HepG2 (cell line): ENCODE measurements at regions of chr6 and their contacts with region 1.

Region 1: DNA sequence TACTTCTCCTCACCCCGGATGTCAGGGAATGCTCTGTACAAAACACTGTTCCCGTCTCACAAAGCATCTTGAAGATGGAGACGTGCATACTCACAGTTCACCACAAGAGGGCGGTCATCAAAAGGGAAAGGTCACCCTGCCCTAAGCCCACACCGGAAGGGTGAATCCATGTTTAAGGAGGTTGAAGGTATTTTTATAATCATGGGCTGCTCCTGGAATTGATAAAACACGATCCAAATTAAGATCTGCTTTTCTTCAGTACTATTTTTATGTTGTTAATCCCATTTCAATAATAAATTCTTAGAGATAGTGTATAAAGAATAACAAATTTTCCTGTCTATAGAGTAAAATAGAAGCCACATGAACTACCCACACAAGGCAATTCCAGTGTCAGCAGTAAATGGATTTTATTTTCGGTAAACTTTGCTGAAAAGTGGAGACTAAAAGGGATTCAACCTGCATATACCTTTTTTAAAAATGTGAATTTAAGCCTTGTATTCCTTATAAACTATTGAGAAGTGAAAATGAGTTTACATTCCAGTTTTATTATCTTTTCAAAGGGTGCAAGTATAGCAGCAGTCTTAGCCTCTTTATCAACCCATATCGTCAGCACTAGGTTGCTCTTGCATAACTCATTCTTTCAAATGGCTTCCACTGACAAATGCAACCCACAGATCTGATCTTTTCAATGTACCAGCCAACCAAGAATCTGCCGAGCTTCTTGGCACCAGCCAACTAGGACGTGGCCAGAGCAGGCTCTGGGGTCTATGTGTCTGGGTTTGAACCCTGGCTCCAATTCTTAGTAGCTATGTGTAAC is 79.7 kb upstream of the MBOAT1 start:
- DNase-seq: peak; percentile 75
- ATAC-seq: peak; percentile 96
- H3K4me3 ChIP-seq: no peak overlapping the region
- H3K27ac ChIP-seq: no peak overlapping the region
- H3K4me1 ChIP-seq: no peaks in the 10 kb centered on the region
- H3K27me3 ChIP-seq: no peaks in the 10 kb centered on the region
- CTCF ChIP-seq: peak; percentile 95
- EP300 ChIP-seq: no peak
- POLR2A ChIP-seq: no peak
- RAD21 ChIP-seq: peak; percentile 82

Region 2: GRCh38 chr6:20534295-20535262 is 242.6 kb after region 1 on chr6 and contains the start of gene CDKAL1:
- CTCF ChIA-PET with region 1: interaction called, 74 read pairs
- POLR2A ChIA-PET with region 1: no interaction called
- in situ Hi-C with region 1: loop called (anchors 5 kb)
- intact Hi-C with region 1: loop called (anchors 1 kb)
- DNase-seq: peak; percentile 91
- ATAC-seq: peak; percentile 97
- H3K4me3 ChIP-seq: peak within 1 kb of the TSS; percentile 84 to 91 (median 86)
- H3K27ac ChIP-seq: peak within 1 kb of the TSS; percentile 84
- H3K4me1 ChIP-seq: peaks cover 29% of the 10 kb centered on the region
- H3K27me3 ChIP-seq: peaks cover 0 to 5% of the 10 kb centered on the region in 2 experiments; a peak in 1 of 5 replicates
- CTCF ChIP-seq: no peak
- EP300 ChIP-seq: 0 out of 4 replicates have a peak, but pooled peaks of 1 of the 2 experiments have one; percentile 38
- POLR2A ChIP-seq: peak; percentile 84 to 95
- RAD21 ChIP-seq: no peak
- total RNA-seq, gene CDKAL1: 27.7 and 33.6 TPM in 2 replicates